Activated T-helper 1 cell treated with anti-CD3 and anti-CD28 coated beads, Interleukin-12 subunit alpha, Interleukin-12 subunit beta, Interleukin-2, Interleukin-4 antibody, amounts not matched to agents 30 ng/mL and 10 ng/mL and 1 ng/mL, durations not matched to agents 14 hours and 24 hours and 36 hours (primary cell): ENCODE measurements at regions of chr1 and their contacts with region 1.

Region 1: GRCh38 chr1:155167166-155168104 is 5.7 kb downstream of the KRTCAP2 start:
- DNase-seq: peak; percentile 77
- H3K4me3 Mint-ChIP-seq: peak overlapping the region; percentile 53
- H3K27ac Mint-ChIP-seq: peak overlapping the region; percentile 61
- H3K4me1 Mint-ChIP-seq: peaks cover 25% of the 10 kb centered on the region
- H3K27me3 Mint-ChIP-seq: peaks cover 8% of the 10 kb centered on the region

Region 2: DNA sequence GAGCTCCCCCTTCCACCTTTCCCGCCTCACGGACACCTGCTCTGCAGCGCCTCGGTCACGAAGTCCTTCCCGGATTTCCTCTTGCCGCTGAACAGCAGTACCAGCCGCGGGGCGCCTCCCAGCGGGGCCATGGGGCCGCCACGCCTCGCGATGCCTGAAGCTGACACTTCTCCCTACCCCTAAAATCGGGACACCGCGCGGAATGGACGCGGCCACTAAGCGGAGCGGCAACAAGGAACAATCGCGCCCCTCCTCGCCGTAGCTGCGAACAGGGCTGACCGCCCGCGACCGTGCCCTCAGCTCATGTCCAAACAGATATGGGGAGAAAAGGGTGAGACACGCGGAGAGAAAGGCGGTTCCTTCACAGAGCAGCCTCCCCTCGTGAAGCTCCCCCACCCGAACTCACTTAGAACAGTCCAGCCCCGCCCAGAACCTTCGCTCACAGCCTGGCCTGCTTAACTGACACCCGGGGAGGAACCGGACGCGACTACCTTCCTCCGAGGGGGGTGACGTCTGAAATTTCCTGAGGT is 230.8 kb before region 1 on chr1 and contains the start of gene PMVK:
- intact Hi-C with region 1: no loop called
- DNase-seq: peak; percentile 92
- H3K4me3 Mint-ChIP-seq: peak within 1 kb of the TSS; percentile 93
- H3K27ac Mint-ChIP-seq: peak within 1 kb of the TSS; percentile 95
- H3K4me1 Mint-ChIP-seq: peaks cover 53% of the 10 kb centered on the region
- H3K27me3 Mint-ChIP-seq: no peaks in the 10 kb centered on the region
- total RNA-seq, gene PMVK: 42.5 and 43.3 TPM in 2 replicates

Region 3: DNA sequence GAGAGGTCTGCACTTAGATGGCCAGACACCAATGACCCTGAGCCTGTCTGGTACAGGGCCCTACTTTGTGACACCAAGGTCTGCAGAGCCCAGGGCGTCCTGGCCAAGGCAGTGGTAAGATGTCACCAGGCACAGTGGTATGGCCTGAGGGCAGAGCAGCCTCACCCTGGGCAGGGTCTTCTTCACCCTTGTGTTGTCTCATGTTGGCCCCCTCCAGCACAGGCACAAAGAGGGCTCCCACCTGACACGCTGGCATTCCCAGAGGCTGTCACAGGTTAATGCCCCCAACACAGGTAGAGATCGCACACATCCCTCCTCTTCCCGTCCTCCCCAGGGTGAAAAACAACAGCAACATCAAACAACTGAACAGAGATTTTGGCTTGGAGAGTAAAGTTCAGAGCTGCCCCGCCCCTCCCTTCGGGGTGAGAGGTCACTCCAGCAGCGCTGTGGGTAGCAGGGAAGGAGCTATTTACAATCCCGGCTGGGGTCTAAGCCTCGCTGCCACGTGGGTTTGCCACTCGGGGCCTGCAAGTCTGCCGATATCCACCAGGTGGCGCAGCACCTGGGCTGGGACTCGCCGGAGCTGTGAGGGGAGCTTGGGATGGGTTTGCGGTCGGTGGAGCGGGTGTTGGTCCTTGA is 76.2 kb before region 1 on chr1:
- intact Hi-C with region 1: loop called (anchors 1 kb)
- DNase-seq: peak; percentile 69
- H3K4me3 Mint-ChIP-seq: no peak overlapping the region
- H3K27ac Mint-ChIP-seq: no peak overlapping the region
- H3K4me1 Mint-ChIP-seq: peaks cover 7% of the 10 kb centered on the region
- H3K27me3 Mint-ChIP-seq: peaks cover 19% of the 10 kb centered on the region

Region 4: DNA sequence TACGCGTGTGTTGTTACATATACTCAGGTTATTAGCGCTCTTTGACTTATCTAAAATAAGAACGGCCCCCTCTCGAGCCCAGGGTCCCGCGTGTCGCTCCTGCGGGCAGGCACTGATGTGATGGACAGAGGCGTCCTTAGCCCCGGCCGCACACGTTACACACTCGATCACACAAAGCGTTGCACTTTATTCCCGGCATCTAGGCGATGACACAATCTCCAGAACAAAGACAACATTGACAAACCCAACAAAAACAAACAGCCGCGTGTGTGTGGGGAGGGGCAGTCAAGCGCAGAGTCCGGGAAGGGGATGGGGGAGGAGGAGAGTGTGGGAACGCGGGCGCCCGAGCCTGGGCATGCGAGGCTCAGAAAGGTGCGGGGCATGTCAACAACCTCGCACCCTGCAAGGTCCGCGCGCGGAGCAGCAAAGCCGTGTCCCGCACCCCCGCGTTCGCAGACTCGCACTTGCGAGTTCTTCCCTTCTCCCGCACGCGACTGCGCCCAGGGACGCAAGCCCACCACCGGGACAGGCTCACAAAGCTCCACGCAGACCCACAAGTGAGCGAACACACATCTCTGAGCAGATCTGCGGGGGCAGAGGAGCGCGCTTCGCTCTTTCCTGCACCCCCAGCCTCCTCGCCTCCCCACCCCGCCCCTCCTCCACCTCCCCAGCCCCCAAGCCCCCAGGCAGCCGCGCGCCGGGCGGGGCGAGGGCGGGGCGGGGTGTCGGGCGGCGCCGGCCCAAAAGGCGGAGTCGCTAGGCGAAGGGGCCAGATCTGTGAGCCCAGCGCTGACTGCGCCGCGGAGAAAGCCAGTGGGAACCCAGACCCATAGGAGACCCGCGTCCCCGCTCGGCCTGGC is 40.1 kb before region 1 on chr1 and contains the start of gene EFNA1:
- intact Hi-C with region 1: loop called (anchors 5 kb)
- DNase-seq: peak; percentile 34
- H3K4me3 Mint-ChIP-seq: peak within 1 kb of the TSS; percentile 82
- H3K27ac Mint-ChIP-seq: no peak within 1 kb of the TSS
- H3K4me1 Mint-ChIP-seq: peaks cover 19% of the 10 kb centered on the region
- H3K27me3 Mint-ChIP-seq: peaks cover 53% of the 10 kb centered on the region
- total RNA-seq, gene EFNA1: not detected in 2 replicates

Region 5: GRCh38 chr1:156338180-156338973 is 1170.9 kb after region 1 on chr1 and contains the starts of genes CCT3 and TSACC:
- intact Hi-C with region 1: no loop called
- DNase-seq: peak; percentile 99
- H3K4me3 Mint-ChIP-seq: peak within 1 kb of the TSS; percentile 98
- H3K27ac Mint-ChIP-seq: peak within 1 kb of the TSS; percentile 95
- H3K4me1 Mint-ChIP-seq: peaks cover 41% of the 10 kb centered on the region
- H3K27me3 Mint-ChIP-seq: peaks cover 5% of the 10 kb centered on the region
- total RNA-seq, gene CCT3: 567 and 570 TPM in 2 replicates
- total RNA-seq, gene TSACC: 0.81 TPM in 1 of 2 replicates, not detected in the other